Right ventricle myocardium superior (tissue), 1 donor: ENCODE measurements at regions of chr7 and their contacts with region 1.

Region 1: DNA sequence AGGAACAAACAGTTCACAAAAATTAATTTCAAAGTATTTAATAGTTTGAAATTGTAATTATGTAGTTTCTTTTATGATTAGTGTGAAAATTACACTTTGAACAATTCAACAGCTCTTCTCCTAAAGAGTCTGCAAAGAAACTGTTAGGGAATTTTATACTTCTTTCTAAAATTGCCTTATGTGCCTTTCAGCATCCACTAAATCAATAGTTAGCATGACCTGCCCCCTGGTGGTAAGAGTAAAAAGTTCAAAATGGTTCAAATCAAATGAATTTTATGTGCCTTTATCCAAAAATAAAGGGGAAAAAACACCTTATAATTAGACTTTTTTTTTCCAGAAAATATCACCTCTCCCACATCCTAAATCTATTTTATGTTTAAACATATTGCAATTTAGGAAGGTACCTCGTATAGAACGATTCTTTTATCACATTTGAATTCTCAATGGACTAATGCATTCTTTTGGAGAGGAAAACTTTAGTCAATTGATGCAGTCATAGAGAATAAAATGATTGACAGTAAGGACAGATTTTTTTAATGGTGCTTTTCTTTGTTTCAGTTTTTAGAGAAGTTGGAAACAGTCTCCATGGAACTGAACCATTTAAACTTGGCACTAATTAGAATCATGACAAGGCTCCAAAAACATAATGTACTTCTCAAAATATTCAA is 163.7 kb downstream of the SEMA3D start:
- DNase-seq: no peak
- ATAC-seq: no peak

Region 2: GRCh38 chr7:83936056-83936708 is 1087.0 kb before region 1 on chr7:
- intact Hi-C with region 1: loop called (anchors 5 kb)
- DNase-seq: no peak
- ATAC-seq: peak; percentile 80

Region 3: GRCh38 chr7:83976295-83976694 is 1046.9 kb before region 1 on chr7:
- intact Hi-C with region 1: loop called (anchors 5 kb)
- DNase-seq: no peak
- ATAC-seq: peak; percentile 71

Region 4: GRCh38 chr7:84914598-84914997 is 108.6 kb before region 1 on chr7:
- intact Hi-C with region 1: loop called (anchors 5 kb)
- DNase-seq: no peak
- ATAC-seq: peak; percentile 81